ENCODE measurements at regions of chr15 and their contacts with region 1.

Region 1: DNA sequence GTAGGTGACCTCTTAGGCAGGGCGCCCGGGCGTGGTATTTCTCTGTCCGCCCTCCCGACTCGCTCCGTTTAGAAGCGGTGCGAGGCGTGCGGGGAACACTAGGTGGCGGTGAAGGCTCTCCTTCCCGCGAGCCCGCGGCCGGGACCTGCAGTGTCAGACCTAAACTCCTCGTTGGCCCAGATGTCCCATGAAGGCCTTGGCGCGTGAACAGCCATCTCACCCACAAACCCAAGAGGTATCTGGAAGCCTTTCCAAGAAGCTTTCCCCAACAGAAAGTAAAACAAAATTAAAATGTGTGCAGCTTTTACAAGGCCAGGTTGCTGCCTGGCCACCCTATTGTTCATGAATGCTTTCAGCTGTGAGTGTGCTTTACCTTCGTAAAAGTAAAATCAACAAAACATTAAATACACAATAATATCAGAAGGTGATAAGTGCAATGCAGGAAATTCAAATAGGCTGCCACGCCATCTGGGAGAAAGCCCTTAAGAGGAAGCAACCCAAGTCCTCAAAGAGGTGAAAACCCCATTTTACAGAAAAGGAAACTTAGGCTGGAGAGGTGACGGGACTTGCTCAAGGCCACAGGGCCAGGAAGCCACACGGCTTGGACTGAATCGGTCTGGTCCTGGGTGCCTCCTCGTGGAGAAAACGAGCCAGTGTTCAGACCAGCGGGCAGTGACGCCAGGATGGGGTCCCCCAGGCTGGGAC is 120.3 kb downstream of the ETFA start:
- DNase-seq: peak; percentile 84
- H3K4me3 ChIP-seq: peak overlapping the region in 1 of 4 donors; percentile 12
- H3K27ac ChIP-seq: no peak overlapping the region
- H3K4me1 ChIP-seq: peaks cover 11 to 17% (median 13%) of the 10 kb centered on the region in 4 donors
- H3K27me3 ChIP-seq: peaks cover 39% of the 10 kb centered on the region
- CTCF ChIP-seq: peak; percentile 83 to 89 (median 84)
- EP300 ChIP-seq: no peak
- POLR2A ChIP-seq: no peak

Region 2: GRCh38 chr15:76206325-76206976 is 15.5 kb after region 1 on chr15:
- in situ Hi-C with region 1: no loop called
- intact Hi-C with region 1: loop called (anchors 1 kb)
- DNase-seq: peak; percentile 62
- H3K4me3 ChIP-seq: no peak overlapping the region
- H3K27ac ChIP-seq: no peak overlapping the region
- H3K4me1 ChIP-seq: no peaks in the 10 kb centered on the region
- H3K27me3 ChIP-seq: no peaks in the 10 kb centered on the region
- CTCF ChIP-seq: no peak
- EP300 ChIP-seq: no peak
- POLR2A ChIP-seq: no peak

Region 3: DNA sequence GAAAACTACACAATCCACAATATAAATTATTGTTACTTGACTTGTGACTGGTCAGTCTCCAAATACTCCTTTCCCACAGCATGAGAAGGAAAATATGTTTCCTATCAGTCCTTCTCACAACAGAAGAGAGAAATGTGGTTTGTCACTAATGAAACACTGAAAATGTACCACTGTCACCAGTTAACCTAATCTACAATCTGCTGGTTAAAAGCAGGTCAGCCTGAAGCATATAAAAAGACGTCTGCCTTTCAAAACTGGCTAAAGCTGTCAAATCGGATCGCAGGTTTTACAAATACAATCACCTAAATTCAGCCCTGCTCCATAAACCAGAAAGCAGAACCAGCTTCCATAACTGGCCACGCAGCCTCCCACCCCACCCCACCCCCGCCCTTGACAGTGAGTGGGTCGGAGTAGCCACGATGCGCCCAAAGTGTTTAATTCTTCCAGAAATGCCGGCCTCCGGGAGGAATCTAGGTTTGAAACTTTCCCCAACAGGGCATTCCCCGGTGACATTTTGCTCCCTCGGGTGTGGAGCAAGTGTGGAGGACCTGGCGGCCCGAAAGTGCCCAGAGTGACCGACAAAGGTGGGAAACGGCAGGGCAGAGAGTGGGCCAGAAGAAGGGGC is 119.6 kb after region 1 on chr15:
- in situ Hi-C with region 1: no loop called
- intact Hi-C with region 1: loop called (anchors 1 kb)
- DNase-seq: no peak
- H3K4me3 ChIP-seq: peak overlapping the region; percentile 41 to 85 (median 63)
- H3K27ac ChIP-seq: peak overlapping the region; percentile 84 to 93 (median 88)
- H3K4me1 ChIP-seq: peaks cover 4 to 21% (median 10%) of the 10 kb centered on the region in 4 donors
- H3K27me3 ChIP-seq: no peaks in the 10 kb centered on the region
- CTCF ChIP-seq: no peak
- EP300 ChIP-seq: no peak
- POLR2A ChIP-seq: no peak

Region 4: GRCh38 chr15:76336254-76337058 is 145.5 kb after region 1 on chr15 and contains the start of gene ISL2:
- in situ Hi-C with region 1: loop called in 1 of 4 experiments (anchors 25 kb)
- intact Hi-C with region 1: loop called (anchors 10 kb)
- DNase-seq: peak; percentile 85
- H3K4me3 ChIP-seq: peak within 1 kb of the TSS; percentile 3 to 56 (median 20)
- H3K27ac ChIP-seq: peak within 1 kb of the TSS; percentile 53 to 70 (median 60)
- H3K4me1 ChIP-seq: peaks cover 4 to 64% (median 52%) of the 10 kb centered on the region in 4 donors
- H3K27me3 ChIP-seq: peaks cover 86% of the 10 kb centered on the region
- CTCF ChIP-seq: no peak
- EP300 ChIP-seq: no peak
- POLR2A ChIP-seq: no peak
- total RNA-seq, gene ISL2: 1.3 to 1.4 TPM in 2 of 4 donors, not detected in the others

Region 5: DNA sequence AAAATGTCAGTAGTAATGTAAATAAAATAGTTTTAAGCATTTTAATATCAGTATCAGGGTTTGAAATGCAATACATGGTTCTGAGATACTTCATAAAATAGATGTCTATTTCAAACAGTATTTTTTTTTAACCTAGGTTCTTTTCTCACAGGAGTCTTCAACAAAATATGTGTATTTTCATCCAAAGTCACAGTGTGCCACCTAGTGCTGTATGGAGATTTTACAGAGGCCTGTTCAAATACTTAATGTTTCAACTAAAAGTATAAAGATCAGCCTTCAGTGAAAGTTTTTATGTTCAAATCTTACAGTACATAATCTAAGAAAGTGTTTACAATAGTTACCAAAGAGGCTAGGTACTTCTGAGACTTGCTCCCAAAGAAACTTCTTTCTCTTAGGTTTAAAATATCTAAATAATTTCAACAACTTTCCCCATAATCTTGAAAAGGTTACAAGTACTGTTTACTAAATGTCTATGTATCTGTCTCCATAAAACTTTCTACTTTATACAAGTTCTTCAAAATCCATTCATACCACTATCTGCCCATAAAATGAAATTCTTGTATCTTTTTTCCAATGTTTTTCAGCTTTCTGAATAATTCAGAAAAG is 675.8 kb after region 1 on chr15:
- in situ Hi-C with region 1: loop called in 1 of 4 experiments (anchors 25 kb)
- intact Hi-C with region 1: no loop called
- DNase-seq: no peak
- H3K4me3 ChIP-seq: no peak overlapping the region
- H3K27ac ChIP-seq: no peak overlapping the region
- H3K4me1 ChIP-seq: peaks cover 0 to 9% (median 2%) of the 10 kb centered on the region in 4 donors
- H3K27me3 ChIP-seq: no peaks in the 10 kb centered on the region
- CTCF ChIP-seq: peak; percentile 28 to 41 (median 40)
- EP300 ChIP-seq: no peak
- POLR2A ChIP-seq: no peak